ENCODE measurements at regions of chr1 and their contacts with region 1.

Region 1: DNA sequence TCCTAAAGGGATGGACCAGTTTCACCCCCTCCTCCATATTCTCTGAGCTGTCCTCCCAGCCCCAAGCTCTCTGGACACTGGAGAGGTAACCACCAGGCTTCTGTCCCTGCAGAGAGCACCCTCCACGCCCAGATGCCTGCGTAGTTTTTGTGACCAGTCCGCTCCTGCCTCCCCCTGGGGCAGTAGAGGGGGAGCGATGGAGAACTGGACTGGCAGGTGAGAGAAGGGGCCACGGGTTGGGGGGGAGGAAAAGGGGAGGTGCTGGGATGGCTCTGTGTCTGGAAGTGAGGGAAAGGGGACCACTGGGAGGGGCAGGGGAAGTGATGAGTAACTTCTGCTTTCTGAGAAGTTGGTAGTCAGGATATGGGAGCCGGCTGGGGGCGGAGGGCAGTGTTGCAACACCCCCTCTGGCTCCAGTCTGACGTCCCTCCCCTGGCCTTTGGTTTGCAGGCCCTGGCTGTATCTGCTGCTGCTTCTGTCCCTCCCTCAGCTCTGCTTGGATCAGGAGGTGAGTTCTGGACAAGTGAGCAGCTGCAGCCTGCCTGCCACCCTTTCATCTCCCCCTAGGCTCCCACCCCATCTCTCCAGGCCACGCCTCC is 3.0 kb downstream of the ADAMTSL4 start:
- DNase-seq: peak in 2 of 3 donors; percentile 67 to 84
- ATAC-seq: peak; percentile 36
- H3K4me3 ChIP-seq: no peak overlapping the region
- H3K4me1 ChIP-seq: peaks cover 13% of the 10 kb centered on the region
- CTCF ChIP-seq: no peak

Region 2: DNA sequence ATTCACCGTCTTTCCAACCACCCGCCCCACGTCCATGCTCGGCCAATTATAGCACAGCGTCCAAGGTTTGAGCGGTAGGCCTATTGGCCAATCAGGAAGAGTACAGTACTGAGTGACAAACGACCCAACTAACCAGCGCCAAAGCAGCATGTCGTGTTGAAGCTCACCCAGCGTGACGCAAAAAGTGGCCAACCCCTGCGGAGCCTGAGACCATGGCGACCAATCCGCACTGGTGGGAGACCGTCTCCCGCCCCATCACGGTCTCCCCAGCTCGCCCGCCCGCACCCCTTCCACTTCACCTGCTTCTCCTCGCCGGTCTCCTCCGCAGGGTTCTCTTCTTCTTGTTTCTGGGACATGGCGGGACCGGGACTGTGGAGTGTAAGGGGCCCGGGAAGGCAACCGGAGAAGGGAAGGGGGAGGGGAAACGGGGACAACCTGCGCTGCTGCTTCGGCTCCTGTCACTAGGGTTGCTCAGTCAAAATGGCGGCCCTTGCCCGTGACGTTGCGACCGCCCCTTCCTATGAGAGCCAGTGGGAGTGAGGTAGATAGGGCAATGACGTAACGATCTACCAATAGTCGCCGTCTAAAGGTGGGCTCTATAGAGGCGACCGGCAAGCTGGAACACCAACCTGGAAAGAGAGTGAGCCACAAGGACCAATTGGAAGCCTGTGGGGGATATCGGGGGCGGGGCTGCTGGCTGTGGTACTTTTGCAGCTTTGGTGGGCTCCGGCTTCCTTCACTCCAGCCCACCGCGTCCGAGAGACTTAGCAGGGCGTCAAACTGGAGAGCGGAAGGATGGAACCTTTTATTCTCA is 77.1 kb after region 1 on chr1 and contains the start of gene ENSA:
- intact Hi-C with region 1: loop called in 1 of 2 experiments (anchors 10 kb)
- DNase-seq: peak; percentile 95 to 98 (median 97)
- ATAC-seq: peak; percentile 95
- H3K4me3 ChIP-seq: peak within 1 kb of the TSS; percentile 31
- H3K4me1 ChIP-seq: peaks cover 22% of the 10 kb centered on the region
- CTCF ChIP-seq: no peak
- total RNA-seq, gene ENSA: 174 to 213 (median 194) TPM